HepG2 (cell line): ENCODE measurements at regions of chr6 and their contacts with region 1.

Region 1: DNA sequence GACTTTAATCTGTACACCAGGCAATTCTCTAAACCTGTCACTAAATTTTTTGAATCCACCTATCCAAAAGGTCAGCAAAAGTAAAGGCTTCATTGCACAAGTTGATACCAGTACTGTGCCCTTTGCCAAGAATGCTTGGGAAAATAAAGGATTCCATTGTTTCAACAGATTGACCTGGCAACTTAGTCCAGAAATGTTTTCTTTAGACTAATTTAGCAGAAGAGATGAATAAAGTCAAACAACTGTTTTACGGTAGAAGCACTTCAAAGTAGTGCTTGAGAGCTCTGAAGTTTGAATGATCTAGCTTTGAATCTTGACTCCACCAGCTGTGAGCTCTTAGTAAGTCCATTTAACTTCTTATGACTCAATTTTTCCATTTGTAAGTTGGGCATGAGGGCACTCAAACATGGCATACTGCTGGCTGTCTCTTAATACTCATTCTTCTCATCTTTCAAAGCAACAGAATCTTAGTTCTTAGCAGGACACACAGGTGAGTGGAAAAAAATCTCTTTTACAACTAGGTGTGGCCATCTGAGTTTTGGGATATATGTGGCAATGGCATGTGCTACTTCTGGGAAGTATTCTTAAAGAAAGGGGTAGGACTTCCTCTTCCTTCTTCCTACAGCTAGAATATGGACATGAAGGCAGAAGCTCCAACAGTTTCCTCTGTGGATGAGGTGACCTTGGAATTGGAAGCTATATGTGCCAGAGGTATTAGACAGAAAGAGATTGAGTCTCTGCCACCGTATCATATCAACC is 55.9 kb upstream of the LOC128125822 start:
- DNase-seq: peak; percentile 100
- ATAC-seq: peak; percentile 51
- H3K4me3 ChIP-seq: peak overlapping the region; percentile 38 to 62 (median 38); a peak in 5 of 6 replicates
- H3K27ac ChIP-seq: peak overlapping the region; percentile 97
- H3K4me1 ChIP-seq: peaks cover 96% of the 10 kb centered on the region
- H3K27me3 ChIP-seq: no peaks in the 10 kb centered on the region
- CTCF ChIP-seq: 0 out of 2 replicates have a peak, but pooled peaks have one; percentile 3
- EP300 ChIP-seq: peak; percentile 73 to 99; a peak in 3 of 4 replicates
- POLR2A ChIP-seq: peak in 1 of 2 experiments; percentile 66; a peak in 2 of 4 replicates
- RAD21 ChIP-seq: peak; percentile 41; the same call in 1 of the 2 replicates

Region 2: GRCh38 chr6:63352587-63353285 is 163.6 kb before region 1 on chr6:
- CTCF ChIA-PET with region 1: interaction called, 4 read pairs
- POLR2A ChIA-PET with region 1: interaction called, 16 read pairs
- in situ Hi-C with region 1: loop called (anchors 10 kb)
- intact Hi-C with region 1: loop called (anchors 2 kb)
- DNase-seq: peak; percentile 80
- ATAC-seq: peak; percentile 97
- H3K4me3 ChIP-seq: no peak overlapping the region
- H3K27ac ChIP-seq: peak overlapping the region; percentile 49
- H3K4me1 ChIP-seq: peaks cover 49% of the 10 kb centered on the region
- H3K27me3 ChIP-seq: no peaks in the 10 kb centered on the region
- CTCF ChIP-seq: peak; percentile 97
- EP300 ChIP-seq: peak in 1 of 2 experiments; percentile 66; a peak in 2 of 4 replicates
- POLR2A ChIP-seq: no peak
- RAD21 ChIP-seq: peak; percentile 99

Region 3: GRCh38 chr6:63452124-63452523 is 64.2 kb before region 1 on chr6:
- CTCF ChIA-PET with region 1: no interaction called
- POLR2A ChIA-PET with region 1: interaction called, 38 read pairs
- in situ Hi-C with region 1: no loop called
- intact Hi-C with region 1: no loop called
- DNase-seq: peak; percentile 93
- ATAC-seq: peak; percentile 99
- H3K4me3 ChIP-seq: peak overlapping the region in 1 of 3 experiments; percentile 5; a peak in 1 of 6 replicates
- H3K27ac ChIP-seq: peak overlapping the region; percentile 79
- H3K4me1 ChIP-seq: peaks cover 90% of the 10 kb centered on the region
- H3K27me3 ChIP-seq: no peaks in the 10 kb centered on the region
- CTCF ChIP-seq: peak; percentile 17; the same call in 1 of the 2 replicates
- EP300 ChIP-seq: peak; percentile 82 to 94; a peak in 3 of 4 replicates
- POLR2A ChIP-seq: 0 out of 4 replicates have a peak, but pooled peaks of 1 of the 2 experiments have one; percentile 32
- RAD21 ChIP-seq: peak; percentile 47; the same call in 1 of the 2 replicates

Region 4: GRCh38 chr6:63496361-63496804 is 20.0 kb before region 1 on chr6:
- CTCF ChIA-PET with region 1: no interaction called
- POLR2A ChIA-PET with region 1: interaction called, 22 read pairs
- in situ Hi-C with region 1: no loop called
- intact Hi-C with region 1: no loop called
- DNase-seq: peak; percentile 70
- ATAC-seq: peak; percentile 35
- H3K4me3 ChIP-seq: no peak overlapping the region
- H3K27ac ChIP-seq: peak overlapping the region; percentile 11
- H3K4me1 ChIP-seq: peaks cover 45% of the 10 kb centered on the region
- H3K27me3 ChIP-seq: no peaks in the 10 kb centered on the region
- CTCF ChIP-seq: no peak
- EP300 ChIP-seq: peak in 1 of 2 experiments; percentile 59; a peak in 2 of 4 replicates
- POLR2A ChIP-seq: no peak
- RAD21 ChIP-seq: no peak

Region 5: GRCh38 chr6:63565058-63565726 is 48.8 kb after region 1 on chr6:
- CTCF ChIA-PET with region 1: no interaction called
- POLR2A ChIA-PET with region 1: interaction called, 32 read pairs
- in situ Hi-C with region 1: loop called (anchors 5 kb)
- intact Hi-C with region 1: loop called (anchors 2 kb)
- DNase-seq: peak; percentile 98
- ATAC-seq: peak; percentile 83
- H3K4me3 ChIP-seq: peak overlapping the region; percentile 24 to 63 (median 42)
- H3K27ac ChIP-seq: peak overlapping the region; percentile 83
- H3K4me1 ChIP-seq: peaks cover 98% of the 10 kb centered on the region
- H3K27me3 ChIP-seq: no peaks in the 10 kb centered on the region
- CTCF ChIP-seq: no peak
- EP300 ChIP-seq: peak; percentile 76 to 95
- POLR2A ChIP-seq: peak in 1 of 2 experiments; percentile 43; a peak in 1 of 4 replicates
- RAD21 ChIP-seq: no peak